K562 (cell line): ENCODE measurements at regions of chr16 and their contacts with region 1.

Region 1: DNA sequence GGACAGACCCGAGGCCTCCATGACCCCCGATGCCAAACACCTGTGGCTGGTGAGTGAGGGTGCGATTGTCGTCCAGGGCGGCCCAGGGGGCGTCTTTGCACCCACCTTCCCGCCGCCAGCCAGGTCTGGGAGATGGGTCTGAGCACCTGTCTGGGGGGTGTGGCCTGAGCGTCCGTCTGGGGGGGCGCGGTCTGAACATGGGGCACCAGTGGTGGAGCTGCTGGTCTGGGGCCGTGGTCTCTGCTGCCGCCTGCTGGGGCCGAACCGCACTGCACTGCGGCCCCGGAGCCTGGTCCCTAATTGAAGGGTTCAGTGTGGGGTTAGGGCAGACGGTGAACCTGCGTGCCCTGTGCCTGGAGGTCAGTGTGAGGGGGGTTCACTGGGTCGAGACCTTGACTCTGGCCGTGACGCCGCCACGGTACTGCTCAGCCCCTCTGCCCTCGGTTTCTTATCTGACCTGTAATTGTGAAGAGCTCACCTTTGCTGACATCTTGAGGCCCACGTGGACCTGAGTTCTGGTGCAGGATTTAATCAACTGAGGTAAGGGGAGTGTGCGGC is 12.6 kb upstream of the TCF25 start:
- DNase-seq: peak; percentile 82 to 97 (median 94)
- ATAC-seq: peak; percentile 98
- H3K4me3 ChIP-seq: no peak overlapping the region
- H3K27ac ChIP-seq: no peak overlapping the region
- H3K4me1 ChIP-seq: peaks cover 3 to 34% of the 10 kb centered on the region in 2 experiments
- H3K27me3 ChIP-seq: no peaks in the 10 kb centered on the region
- CTCF ChIP-seq: peak; percentile 96 to 98 (median 97)
- EP300 ChIP-seq: no peak
- POLR2A ChIP-seq: no peak
- RAD21 ChIP-seq: peak; percentile 93 to 97

Region 2: DNA sequence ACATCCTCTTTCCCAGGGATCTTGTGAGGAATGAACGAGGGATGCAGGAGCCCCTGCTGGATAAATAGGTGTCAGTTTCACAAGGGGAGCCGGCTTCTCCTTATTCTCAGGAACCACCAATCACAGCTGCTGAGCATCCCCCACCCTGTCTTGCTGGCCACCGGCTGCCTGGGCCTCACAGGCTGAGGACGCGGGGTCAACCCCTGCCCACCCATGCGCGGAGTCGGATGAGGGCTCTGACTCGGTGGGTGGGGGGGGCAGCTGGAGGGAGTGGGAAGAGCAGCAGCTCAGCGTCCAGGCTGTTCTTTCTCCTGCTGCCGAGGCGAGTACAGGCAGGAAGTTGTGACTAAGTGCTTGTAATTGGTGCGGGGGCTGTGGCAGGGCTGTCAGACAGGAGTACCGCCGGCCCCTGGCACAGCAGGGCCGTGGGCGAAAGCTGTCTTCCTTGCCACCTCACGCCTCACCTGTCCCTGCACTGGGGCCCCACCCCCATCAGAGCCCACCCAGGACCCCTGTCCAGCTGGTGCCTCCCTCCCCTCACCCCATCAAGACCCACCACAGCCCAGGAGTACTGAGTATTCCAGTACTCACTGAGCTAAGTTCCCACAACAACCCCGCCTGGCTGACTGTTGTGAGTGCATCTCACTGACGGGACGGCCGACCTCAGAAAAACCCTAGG is 258.4 kb before region 1 on chr16:
- CTCF ChIA-PET with region 1: no interaction called
- POLR2A ChIA-PET with region 1: no interaction called
- in situ Hi-C with region 1: loop called (anchors 10 kb)
- intact Hi-C with region 1: no loop called
- DNase-seq: peak; percentile 34 to 60 (median 43)
- ATAC-seq: peak; percentile 65
- H3K4me3 ChIP-seq: no peak overlapping the region
- H3K27ac ChIP-seq: no peak overlapping the region
- H3K4me1 ChIP-seq: peaks cover 3 to 52% of the 10 kb centered on the region in 2 experiments; a peak in 4 of 5 replicates
- H3K27me3 ChIP-seq: no peaks in the 10 kb centered on the region
- CTCF ChIP-seq: no peak
- EP300 ChIP-seq: no peak
- POLR2A ChIP-seq: no peak
- RAD21 ChIP-seq: no peak

Region 3: DNA sequence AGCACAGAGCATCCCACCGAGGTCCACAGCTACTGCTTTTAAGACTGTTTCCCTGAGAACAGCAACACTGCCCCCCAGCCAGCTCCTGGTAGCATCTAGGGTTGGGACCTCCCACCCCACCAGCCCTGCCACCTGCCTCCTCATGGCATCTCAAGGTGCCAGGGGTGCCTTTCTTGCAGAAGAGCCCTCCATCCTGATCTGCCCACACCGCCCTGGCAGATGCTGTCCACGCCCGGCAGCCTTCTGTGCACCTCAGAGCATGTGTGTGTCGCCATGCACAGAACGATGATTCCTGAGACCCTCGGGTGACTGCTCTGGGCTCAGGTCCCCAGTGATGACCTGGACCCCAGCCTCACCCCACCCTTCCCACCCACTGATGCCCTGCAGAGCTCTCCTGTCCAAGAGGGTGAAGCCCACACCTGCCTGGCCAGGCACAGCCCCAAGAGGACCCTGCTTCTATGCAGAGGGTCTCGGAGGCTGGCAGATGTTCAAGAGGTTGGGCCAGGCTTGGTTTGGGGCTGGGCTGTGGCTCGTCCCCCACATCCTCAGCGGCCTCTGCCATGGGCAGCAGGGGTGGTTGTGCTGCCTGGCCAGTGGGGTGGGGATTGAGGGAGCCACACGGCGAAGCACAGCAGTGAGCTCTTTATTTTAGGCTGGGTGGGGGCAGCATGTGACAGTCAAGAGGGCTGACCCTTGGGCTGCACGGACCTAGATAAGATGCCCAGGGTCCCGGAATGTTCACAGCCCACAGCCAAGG is 154.1 kb before region 1 on chr16:
- CTCF ChIA-PET with region 1: interaction called, 18 read pairs
- POLR2A ChIA-PET with region 1: interaction called, 7 read pairs
- in situ Hi-C with region 1: loop called (anchors 5 kb)
- intact Hi-C with region 1: loop called (anchors 1 kb)
- DNase-seq: no peak
- ATAC-seq: no peak
- H3K4me3 ChIP-seq: no peak overlapping the region
- H3K27ac ChIP-seq: no peak overlapping the region
- H3K4me1 ChIP-seq: peaks cover 23 to 74% of the 10 kb centered on the region in 2 experiments; a peak in 4 of 5 replicates
- H3K27me3 ChIP-seq: no peaks in the 10 kb centered on the region
- CTCF ChIP-seq: no peak
- EP300 ChIP-seq: no peak
- POLR2A ChIP-seq: no peak
- RAD21 ChIP-seq: no peak

Region 4: DNA sequence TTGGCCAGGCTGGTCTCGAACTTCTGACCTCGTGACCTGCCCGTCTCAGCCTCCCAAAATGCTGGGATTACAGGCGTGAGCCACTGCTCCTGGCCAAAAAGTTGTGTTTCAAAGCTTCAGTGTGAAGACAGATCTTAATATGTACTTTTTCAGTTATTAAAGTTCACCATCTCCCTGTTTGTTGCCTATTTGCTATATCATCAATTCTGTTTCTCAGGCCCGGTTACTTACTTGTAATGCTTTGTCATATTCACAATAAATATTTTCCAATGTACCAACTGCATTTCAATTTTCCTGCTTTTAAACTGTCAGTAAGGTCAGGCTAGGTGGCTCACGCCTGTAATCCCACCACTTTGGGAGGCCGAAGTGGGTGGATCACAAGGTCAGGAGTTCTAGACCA is 66.9 kb before region 1 on chr16:
- CTCF ChIA-PET with region 1: no interaction called
- POLR2A ChIA-PET with region 1: interaction called, 3 read pairs
- in situ Hi-C with region 1: no loop called
- intact Hi-C with region 1: loop called (anchors 2 kb)
- DNase-seq: no peak
- ATAC-seq: no peak
- H3K4me3 ChIP-seq: no peak overlapping the region
- H3K27ac ChIP-seq: no peak overlapping the region
- H3K4me1 ChIP-seq: no peaks in the 10 kb centered on the region
- H3K27me3 ChIP-seq: no peaks in the 10 kb centered on the region
- CTCF ChIP-seq: no peak
- EP300 ChIP-seq: no peak
- POLR2A ChIP-seq: no peak
- RAD21 ChIP-seq: no peak

Region 5: DNA sequence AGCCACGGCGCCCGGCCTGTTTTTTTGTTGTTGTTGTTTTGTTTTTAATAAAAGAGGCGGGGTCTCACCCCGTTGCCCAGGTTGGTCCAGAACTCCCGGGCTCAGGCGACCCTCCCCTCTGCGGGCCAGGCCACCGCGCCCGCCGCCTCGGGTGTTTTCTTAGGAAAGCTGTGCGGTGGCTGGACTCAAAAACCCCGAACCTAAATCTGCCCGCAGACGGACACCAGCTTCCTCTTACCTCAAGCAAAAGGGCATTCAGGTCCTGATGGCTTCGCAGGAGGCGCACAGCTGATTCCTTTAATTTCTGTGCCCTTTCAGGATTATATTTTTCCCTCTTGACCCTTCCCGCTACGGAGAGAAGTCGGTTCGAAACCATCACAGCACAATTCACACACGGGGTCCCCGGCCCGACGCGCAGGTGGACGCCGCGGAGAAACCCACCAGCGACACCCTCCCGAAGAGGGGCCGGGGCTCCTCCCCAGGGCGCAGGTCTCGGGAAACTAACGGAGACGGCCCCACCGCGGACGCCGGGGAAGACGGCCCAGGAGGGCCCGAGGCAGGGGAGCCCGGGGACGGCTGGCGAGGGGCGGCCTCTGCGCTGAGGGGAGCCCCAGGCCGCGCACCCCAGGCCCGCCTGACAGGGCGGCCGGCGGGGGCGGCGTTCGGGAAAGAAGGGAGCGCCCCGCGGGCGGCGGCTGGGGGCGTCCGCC is 45.0 kb before region 1 on chr16:
- CTCF ChIA-PET with region 1: interaction called, 3 read pairs
- POLR2A ChIA-PET with region 1: interaction called, 4 read pairs
- in situ Hi-C with region 1: no loop called
- intact Hi-C with region 1: loop called (anchors 2 kb)
- DNase-seq: peak in 2 of 4 experiments; percentile 36 to 47
- ATAC-seq: peak; percentile 3
- H3K4me3 ChIP-seq: peak overlapping the region; percentile 75
- H3K27ac ChIP-seq: peak overlapping the region; percentile 85
- H3K4me1 ChIP-seq: peaks cover 11 to 41% of the 10 kb centered on the region in 2 experiments; a peak in 4 of 5 replicates
- H3K27me3 ChIP-seq: no peaks in the 10 kb centered on the region
- CTCF ChIP-seq: no peak
- EP300 ChIP-seq: no peak
- POLR2A ChIP-seq: no peak
- RAD21 ChIP-seq: no peak

Region 6: DNA sequence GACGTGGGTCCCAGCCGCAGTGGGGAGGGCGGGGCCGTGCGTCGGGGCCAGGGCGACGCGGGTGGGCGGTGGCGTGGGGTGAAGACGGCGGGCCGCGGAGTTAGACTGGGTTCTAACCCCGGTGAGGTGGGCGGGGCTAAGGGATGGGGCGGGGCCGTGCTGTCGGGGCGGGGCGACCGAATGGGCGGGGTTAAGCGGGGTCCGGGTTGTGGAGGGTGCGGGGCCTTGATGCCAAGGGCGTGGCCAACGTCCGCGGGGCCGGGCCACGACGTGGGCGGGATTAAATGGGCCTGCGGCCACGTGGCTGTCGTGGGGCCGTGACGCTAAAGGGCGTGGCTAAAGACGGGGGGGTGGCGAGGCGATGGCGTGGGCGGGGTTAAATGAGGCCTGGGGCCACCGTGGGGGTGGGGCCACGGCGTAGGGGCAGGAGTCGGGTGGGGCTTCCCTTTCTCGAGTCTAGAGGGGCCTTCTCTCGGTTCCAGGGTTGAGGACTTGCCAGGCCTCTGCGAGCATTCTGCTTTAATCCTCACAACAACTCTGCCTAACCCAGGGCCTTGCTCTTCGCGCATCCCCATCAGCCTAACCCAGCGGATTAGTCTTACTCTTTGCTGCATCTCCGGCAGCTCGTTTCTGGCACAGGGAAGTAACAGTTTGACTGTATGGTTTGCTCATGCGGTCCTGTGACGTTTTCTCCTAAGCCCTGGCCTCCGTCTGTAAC is 13.3 kb after region 1 on chr16:
- CTCF ChIA-PET with region 1: no interaction called
- POLR2A ChIA-PET with region 1: interaction called, 25 read pairs
- in situ Hi-C with region 1: no loop called
- intact Hi-C with region 1: no loop called
- DNase-seq: peak; percentile 95 to 98 (median 96)
- ATAC-seq: peak; percentile 88
- H3K4me3 ChIP-seq: peak overlapping the region; percentile 80
- H3K27ac ChIP-seq: peak overlapping the region; percentile 97
- H3K4me1 ChIP-seq: peaks cover 11 to 34% of the 10 kb centered on the region in 2 experiments
- H3K27me3 ChIP-seq: no peaks in the 10 kb centered on the region
- CTCF ChIP-seq: no peak
- EP300 ChIP-seq: no peak
- POLR2A ChIP-seq: no peak
- RAD21 ChIP-seq: no peak